Activated naive CD4-positive, alpha-beta T cell treated with anti-CD3 and anti-CD28 coated beads for 36 hours (primary cell): ENCODE measurements at regions of chr17 and their contacts with region 1.

Region 1: DNA sequence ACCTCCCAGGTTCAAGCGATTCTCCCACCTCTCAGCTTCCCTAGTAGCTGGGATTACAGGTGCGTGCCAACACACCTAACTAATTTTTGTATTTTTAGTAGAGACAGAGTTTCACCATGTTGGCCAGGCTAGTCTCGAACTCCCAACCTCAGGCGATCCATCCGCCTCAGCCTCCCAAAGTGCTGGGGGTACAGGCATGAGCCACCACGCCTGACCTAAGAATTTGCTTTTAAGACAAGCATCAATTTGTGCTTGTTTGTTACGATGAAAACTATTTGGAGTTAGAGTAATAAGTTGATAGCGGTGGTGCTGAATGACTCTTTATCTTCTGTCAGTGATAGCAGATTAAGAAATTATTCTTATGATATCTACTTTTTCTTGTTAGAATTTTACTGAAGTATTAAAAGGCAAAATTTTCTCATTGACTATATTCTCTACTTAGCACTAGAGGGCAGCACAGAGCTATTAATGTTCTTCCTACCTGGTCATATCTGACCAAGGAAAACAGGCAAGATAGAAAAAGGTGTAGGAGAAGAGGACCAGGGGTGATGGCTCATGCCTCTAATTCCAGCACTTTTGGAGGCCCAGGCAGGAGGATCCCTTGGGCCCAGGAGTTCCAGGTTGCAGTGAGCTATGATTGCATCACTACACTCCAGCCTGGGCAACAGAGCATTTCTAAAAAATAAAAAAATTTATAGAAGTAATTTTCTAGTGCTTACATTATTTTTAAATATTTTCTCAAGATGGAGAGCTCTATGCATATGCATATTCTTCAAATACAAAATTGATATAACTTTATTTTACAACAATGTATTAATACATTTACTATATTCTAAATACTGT is 24.5 kb downstream of the STXBP4 start:
- DNase-seq: no peak
- H3K4me3 Mint-ChIP-seq: no peak overlapping the region
- H3K27ac Mint-ChIP-seq: no peak overlapping the region
- H3K4me1 Mint-ChIP-seq: no peaks in the 10 kb centered on the region
- H3K27me3 Mint-ChIP-seq: no peaks in the 10 kb centered on the region

Region 2: DNA sequence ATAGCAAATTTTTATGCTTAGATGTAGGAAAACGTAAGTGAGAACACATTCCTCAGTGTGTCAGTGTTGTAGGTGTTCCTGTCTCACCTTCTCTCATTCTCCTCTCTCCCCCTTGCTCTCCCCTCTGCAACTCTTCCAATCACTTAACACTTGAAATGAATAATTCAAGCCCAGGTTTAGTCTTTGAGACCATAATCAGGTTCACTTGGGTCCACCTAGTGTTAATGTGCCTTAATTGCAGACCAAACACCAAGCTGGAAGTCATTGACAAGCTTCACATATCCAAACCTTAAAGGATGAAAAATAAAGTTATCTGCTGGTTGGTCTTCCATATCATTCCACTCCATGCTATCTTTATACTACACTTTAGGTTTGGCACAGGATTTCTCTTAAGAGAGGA is 12.5 kb after region 1 on chr17:
- CTCF ChIA-PET with region 1: interaction called, 15 read pairs
- intact Hi-C with region 1: no loop called
- DNase-seq: no peak
- H3K4me3 Mint-ChIP-seq: no peak overlapping the region
- H3K27ac Mint-ChIP-seq: no peak overlapping the region
- H3K4me1 Mint-ChIP-seq: no peaks in the 10 kb centered on the region
- H3K27me3 Mint-ChIP-seq: no peaks in the 10 kb centered on the region

Region 3: DNA sequence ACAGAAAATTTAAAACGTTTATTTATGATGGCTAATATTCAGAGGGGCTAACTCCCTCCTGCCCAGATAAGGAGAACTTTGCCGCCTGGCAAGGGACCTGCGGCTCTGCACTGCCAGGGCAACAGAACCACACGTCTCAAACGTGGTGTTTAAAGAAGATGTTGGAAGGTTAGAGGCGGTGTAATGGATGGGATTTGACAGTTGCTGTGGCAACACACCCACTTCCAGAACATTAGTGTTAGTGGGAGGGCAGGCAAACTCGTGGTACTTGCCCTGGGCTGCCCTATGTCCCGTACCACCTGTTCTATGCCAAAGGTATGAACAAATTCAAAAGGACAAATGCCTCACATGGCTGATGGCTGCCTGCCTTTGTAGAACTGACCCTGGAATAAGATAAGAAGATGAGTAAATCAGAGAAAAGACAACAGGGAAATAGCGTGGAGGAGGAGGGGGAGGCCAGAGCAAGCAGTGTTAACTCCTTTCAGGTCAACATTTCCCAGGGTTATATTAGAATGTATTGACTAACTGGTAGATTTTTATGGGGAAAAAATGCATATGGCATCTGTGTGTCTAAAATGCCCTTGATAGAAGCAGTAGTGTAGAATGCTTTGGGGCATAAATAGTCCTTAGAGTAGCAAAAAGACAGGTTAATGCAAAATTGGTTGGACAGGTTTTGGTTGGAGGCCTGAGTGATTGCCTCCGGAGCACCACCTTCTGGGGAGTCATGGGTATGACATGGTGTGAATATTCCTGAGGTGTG is 302.6 kb after region 1 on chr17:
- CTCF ChIA-PET with region 1: interaction called, 26 read pairs
- intact Hi-C with region 1: loop called (anchors 1 kb)
- DNase-seq: peak; percentile 72
- H3K4me3 Mint-ChIP-seq: no peak overlapping the region
- H3K27ac Mint-ChIP-seq: no peak overlapping the region
- H3K4me1 Mint-ChIP-seq: no peaks in the 10 kb centered on the region
- H3K27me3 Mint-ChIP-seq: peaks cover 6% of the 10 kb centered on the region

Region 4: DNA sequence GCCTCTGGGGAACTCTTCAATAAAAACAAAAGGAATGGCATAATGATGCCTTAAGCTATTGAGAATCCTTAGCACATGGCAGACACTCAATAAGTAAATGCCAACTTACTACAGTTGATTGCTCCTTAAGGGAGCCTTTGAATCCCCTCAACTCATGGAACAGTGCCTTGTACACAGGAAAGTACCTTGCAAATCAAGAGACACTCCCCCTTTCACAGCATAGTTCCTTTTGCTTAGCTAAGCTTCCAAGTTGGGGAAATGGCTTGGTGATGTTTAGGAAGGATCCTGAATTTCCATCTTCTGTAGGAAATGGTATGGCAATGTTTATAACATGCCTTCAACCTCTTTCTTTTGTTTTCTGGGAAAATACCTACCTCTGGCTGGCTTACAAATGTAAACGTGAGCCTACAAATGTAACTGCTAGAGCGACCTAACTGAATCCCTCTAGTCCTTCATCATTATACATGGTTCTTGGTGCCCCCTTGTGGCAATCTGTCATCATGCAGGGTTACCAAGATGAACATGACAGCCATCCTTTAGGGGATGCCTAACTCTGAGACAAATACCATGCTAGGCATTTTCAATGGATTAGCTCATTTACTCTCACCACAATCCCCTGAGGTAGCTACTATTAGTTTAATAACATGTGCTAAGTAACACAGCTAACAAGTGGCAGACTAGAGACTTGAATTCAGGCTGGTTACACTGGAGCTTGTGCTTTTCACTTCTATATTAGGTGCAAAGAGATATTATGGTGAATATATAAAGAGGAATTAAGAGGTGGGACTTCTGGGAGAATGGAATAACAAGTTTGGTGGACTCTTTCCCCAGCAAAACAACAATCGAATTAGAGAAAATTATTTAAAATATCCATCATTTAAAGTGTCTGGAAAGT is 363.7 kb after region 1 on chr17:
- CTCF ChIA-PET with region 1: interaction called, 20 read pairs
- intact Hi-C with region 1: no loop called
- DNase-seq: peak; percentile 88
- H3K4me3 Mint-ChIP-seq: no peak overlapping the region
- H3K27ac Mint-ChIP-seq: no peak overlapping the region
- H3K4me1 Mint-ChIP-seq: no peaks in the 10 kb centered on the region
- H3K27me3 Mint-ChIP-seq: peaks cover 9% of the 10 kb centered on the region